ENCODE measurements at regions of chrX and their contacts with region 1.

Region 1: DNA sequence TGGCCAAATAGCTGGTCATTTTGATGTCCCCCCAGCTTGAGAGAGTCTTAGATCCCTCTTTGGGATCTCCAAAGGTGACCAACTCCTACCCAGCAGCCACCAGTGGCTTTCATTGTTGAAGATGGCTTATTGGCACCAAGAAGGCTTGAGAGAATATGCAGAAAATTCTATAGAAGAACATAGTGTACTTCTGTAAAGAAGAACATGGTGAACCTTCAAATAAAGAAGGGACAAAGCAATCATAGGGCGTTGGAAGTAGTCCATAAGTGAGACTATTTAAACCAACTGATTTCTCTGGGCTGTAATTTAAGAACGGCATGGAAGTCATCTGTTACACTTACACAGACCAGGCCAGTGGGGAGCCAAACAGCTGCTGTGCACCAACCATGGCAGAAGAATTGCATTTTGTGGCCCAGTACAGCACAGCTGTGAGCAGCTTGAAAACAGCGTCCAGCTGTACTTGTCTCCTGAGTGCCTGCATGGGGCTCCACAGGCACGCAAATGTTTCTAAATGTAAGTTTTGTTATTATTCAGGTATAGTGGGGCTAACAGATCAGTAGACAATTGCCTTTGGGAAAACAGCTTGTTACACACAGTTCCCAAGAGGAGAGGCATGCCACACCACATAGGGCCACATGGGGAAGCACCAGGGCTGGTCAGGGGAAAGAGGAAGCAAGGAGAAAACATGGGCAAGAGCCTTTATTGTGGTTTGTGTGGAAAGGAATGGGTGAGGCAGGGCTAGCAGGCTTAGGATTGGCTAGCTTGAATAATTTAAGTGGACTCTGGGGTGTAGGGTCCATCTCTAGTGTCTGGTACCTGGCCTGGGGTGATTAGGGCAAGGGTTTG is 125.0 kb downstream of the ARHGAP6 start:
- DNase-seq: peak; percentile 10
- CTCF ChIP-seq: peak; percentile 14

Region 2: DNA sequence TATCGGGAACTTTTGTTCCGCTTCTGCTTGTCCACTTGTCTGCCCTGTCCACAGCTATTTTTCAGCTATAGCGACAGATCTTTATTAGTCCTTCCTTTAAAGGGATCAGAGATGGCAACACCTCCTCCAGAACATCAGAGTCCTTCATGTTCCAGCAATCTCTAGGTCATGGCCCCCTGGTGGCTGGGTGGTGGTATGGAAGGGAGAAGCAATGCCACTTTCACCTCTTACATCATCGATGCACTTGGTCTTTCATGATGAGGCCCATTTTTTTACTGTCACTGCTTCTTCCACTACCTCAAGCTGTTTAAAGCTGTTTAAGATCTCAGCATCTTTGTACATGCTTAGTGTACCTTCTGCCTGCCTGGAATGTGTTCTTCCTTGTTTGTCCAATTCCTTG is 18.2 kb after region 1 on chrX:
- CTCF ChIA-PET with region 1: interaction called, 14 read pairs
- POLR2A ChIA-PET with region 1: no interaction called
- DNase-seq: peak; percentile 24
- CTCF ChIP-seq: no peak

Measured in GM10248 (cell line).